ENCODE measurements at regions of chr1 and their contacts with region 1.

Region 1: DNA sequence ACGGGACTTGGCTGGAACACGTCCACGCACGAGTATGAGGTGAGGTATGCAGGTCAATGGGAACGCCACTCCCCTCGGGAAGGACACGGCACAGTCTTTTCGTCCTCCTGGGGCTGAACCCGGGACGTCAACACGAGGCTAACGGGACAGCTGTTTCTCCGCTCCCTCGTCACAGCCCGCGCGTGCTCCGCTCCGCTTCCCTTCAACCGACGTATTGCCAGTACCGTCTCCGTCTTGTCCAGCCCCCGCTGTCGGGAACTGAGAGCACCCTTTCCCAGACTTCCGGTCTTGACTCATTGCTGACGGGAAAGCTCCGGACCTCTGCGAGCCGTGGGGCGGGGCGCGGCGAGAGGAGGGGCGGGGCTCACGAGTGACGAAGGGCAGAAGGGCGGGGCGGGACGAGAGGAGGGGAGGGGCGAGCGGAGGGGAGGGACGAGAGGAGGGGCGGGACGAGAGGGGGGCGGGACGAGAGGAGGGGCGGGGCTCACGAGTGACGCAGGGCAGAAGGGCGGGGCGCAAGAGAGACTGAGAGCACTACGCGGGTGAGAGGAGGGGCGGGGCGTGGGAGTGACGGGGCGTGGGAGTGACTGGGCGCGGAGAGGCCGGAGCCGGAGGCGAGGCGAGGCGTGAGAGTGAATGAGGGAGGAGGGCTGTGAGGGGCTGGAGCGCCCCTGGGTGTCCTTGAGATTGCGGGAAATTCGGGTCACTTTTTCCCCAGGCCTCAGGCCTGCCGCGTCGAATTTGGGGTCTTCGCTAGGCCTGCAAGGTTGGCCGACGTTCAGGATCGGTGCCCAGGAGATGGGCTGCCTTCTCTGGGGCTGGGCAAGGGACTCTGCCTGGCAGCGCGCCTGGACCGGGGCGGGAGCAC is 22.2 kb upstream of the CFAP126 start:
- DNase-seq: peak; percentile 93 to 100 (median 98)
- ATAC-seq: peak; percentile 93
- H3K4me3 ChIP-seq: peak overlapping the region; percentile 59 to 64
- H3K27ac ChIP-seq: peak overlapping the region; percentile 97 to 98
- H3K4me1 ChIP-seq: peaks cover 3 to 20% of the 10 kb centered on the region in 2 donors
- H3K27me3 ChIP-seq: no peaks in the 10 kb centered on the region
- CTCF ChIP-seq: no peak

Region 2: DNA sequence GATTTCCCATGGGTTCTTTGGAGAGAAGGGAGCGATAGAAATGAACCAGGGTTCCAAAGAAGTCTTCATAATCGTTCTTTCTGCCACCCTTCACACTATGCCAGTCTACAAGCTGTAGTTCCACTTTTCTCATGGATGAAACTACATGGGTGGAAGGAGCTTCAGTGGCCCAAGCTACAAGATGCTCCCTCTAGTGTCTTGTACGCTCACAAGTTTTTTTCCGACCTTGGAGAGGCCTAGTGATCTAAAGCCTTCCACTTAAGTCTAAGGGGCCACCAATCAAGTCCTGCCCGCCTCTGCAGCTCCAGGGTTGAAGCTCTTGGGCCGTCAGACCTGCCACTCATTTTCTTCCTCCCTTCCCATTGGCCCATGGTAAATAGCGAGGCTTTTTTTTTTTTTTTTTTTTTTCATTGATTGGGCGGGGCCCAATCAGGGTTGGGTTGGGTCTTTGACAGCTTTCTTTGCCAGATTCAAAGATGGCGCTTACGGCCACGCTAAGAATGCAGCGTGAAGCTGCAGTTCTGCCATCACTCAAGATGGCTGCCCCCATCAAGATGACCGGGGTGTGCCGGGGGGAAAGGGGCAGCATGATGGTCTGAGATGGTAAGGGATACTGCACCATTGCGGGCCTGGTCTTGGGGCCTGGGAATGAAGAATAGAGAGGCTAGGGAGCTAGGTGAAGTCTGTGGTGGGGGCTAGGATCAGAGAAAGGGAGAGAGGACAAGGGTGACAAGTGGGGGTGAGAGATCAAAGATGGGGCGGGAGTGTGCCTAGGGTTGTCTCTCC is 164.2 kb before region 1 on chr1 and contains the start of gene TOMM40L:
- intact Hi-C with region 1: loop called in 1 of 2 experiments (anchors 10 kb)
- DNase-seq: peak; percentile 85 to 96 (median 94)
- ATAC-seq: peak; percentile 96
- H3K4me3 ChIP-seq: peak within 1 kb of the TSS; percentile 48 to 59
- H3K27ac ChIP-seq: peak within 1 kb of the TSS in 1 of 2 donors; percentile 76
- H3K4me1 ChIP-seq: peaks cover 11 to 41% of the 10 kb centered on the region in 2 donors
- H3K27me3 ChIP-seq: no peaks in the 10 kb centered on the region
- CTCF ChIP-seq: peak; percentile 40 to 49
- polyA plus RNA-seq, gene TOMM40L: 9.2 to 12.7 (median 10.9) TPM

Measured in left lung (tissue), 14 donors.